ENCODE measurements at regions of chr22 and their contacts with region 1.

Region 1: DNA sequence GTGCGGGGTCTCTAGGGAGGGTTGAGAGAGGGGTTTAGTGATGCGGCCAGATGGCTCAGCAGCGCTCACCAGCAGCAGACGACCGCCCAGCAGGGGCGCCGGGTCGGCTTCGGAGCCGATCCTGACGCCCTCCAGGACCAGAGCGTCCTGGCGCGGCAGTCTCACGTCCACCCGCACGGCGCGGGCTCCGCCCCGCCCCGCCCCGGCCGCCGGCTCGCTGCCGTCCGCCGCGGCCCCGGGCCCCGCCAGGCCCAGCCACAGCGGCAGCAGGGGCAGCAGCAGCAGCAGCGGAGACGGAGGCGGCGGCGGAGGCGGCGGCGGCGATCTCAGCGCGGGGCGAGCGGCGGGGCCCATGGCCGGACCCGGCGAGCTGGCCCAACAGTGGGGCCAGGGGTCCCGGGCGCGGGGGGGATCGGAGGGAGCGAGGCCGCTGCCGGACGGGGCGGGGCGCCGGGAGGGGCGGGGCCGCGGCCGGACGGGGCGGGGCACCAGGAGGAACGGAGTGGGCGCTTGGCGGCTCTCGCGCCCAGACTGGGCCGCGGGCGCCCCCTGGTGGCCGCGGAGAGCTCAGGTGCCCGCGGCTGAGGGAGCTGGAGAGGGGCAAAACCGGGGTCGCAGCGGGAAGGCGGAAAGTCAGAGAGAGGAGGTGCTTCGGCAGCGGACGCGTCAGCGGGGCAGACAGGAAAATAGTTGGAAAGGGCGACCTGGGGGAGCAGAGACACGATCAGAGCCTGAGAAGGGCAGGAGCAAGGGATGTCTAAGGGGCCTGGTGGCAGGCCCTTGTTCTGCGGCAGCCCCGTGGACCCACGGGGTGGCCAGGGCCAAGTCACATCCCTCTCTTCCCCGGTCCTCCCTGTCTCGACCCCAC is at the start of gene RNF215:
- DNase-seq: peak; percentile 41 to 93 (median 86)

Region 2: GRCh38 chr22:30287648-30288418 is 99.4 kb before region 1 on chr22:
- intact Hi-C with region 1: loop called (anchors 2 kb)
- DNase-seq: peak; percentile 63 to 94 (median 82)

Region 3: DNA sequence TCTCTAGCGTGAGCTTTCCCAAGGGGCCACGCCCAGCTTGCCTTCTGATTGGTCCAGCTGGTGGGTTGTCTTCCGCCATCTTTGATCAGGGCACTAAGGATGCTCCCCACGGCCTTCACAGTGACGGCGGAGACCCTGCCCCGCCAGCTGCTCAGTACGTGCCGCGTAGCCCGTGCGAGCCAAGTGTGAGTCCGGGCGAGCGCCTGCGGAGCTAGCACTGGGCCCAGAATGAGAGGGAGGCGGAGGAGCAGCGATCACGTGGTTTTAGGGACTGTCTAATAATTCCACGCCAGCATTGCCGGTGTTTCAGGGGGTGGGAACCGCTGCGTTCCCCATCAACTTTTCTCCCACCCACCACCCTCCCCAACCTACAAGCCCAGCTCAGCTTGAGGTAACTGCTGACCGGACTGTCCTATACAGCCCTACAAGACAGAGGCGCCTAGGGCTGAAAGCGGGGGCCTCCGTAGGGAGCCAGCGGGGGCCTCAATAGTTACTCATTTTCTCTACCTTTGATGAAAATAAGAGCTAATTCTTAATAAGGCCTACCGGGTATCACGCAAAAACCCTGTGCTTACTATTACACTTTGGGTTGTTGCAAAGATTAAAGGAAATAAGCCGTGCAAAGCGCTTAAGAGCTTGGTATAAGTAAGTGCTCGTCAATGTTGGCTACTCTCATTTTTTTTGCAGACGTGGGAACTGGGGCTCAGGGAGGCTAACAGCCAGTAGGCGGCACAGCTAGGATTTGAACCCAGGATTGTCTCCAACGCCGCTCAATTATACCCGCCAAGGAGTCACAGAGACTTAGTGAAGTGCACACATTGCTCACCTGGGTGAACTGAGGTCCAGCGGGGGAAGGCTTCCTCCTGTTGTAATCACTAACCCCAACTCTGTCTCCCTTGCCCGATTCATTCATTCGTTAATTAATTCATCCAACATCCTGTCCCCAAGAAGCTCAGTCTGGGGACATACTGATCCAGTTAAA is 37.1 kb after region 1 on chr22:
- intact Hi-C with region 1: loop called (anchors 5 kb)
- DNase-seq: peak; percentile 96 to 100 (median 99)

Region 4: GRCh38 chr22:30444632-30445437 is 57.6 kb after region 1 on chr22:
- intact Hi-C with region 1: no loop called
- DNase-seq: peak; percentile 32 to 87 (median 65)

Region 5: DNA sequence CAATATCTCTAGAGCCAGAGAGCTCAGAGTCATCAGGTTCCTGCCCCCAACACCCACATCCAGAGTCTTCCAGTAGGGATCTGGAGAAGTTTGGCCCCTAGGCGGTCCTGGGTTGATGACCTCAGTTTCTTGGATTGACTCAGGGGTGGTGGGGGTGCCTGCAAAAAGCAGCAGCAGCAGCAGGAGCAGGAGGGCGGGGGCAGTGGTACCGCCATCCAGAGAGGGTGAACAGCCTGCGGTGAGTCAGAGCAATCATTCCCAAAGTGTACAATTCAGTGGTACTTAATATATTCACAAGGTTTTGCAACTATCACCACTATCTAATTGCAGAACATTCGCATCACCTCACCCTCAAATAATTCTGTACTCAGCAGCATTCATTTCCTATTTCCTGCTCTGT is 94.5 kb after region 1 on chr22:
- intact Hi-C with region 1: loop called (anchors 5 kb)
- DNase-seq: peak in 41 of 42 donors; percentile 27 to 89 (median 62)

Measured in head of caudate nucleus (tissue), 42 donors.